ENCODE measurements at regions of chr14 and their contacts with region 1.

Region 1: GRCh38 chr14:100828031-100828769 is 2.3 kb downstream of the MEG3 start:
- DNase-seq: no peak
- ATAC-seq: peak; percentile 46 to 70 (median 52)
- H3K4me3 ChIP-seq: peak overlapping the region in 1 of 3 donors; percentile 21
- H3K27ac ChIP-seq: no peak overlapping the region
- H3K4me1 ChIP-seq: no peaks in the 10 kb centered on the region
- H3K27me3 ChIP-seq: no peaks in the 10 kb centered on the region
- CTCF ChIP-seq: peak; percentile 37 to 59 (median 40)
- POLR2A ChIP-seq: no peak

Region 2: GRCh38 chr14:100709289-100710284 is 118.6 kb before region 1 on chr14:
- intact Hi-C with region 1: loop called in 1 of 2 experiments (anchors 10 kb)
- DNase-seq: no peak
- ATAC-seq: peak in 3 of 4 donors; percentile 33 to 68 (median 47)
- H3K4me3 ChIP-seq: no peak overlapping the region
- H3K27ac ChIP-seq: no peak overlapping the region
- H3K4me1 ChIP-seq: no peaks in the 10 kb centered on the region
- H3K27me3 ChIP-seq: no peaks in the 10 kb centered on the region
- CTCF ChIP-seq: peak in 3 of 4 donors; percentile 5 to 40 (median 38)
- POLR2A ChIP-seq: no peak